Dorsolateral prefrontal cortex (tissue), 120 donors: ENCODE measurements at regions of chr3 and their contacts with region 1.

Region 1: GRCh38 chr3:160707187-160707794 is 30.3 kb downstream of the ARL14 start:
- DNase-seq: peak in 3 of 10 donors; percentile 17 to 60 (median 59)
- H3K4me3 ChIP-seq: peak overlapping the region in 7 of 59 donors; percentile 4 to 26 (median 12)
- H3K27ac ChIP-seq: no peak overlapping the region
- H3K27me3 ChIP-seq: no peaks in the 10 kb centered on the region
- CTCF ChIP-seq: peak; percentile 15 to 87 (median 68)

Region 2: GRCh38 chr3:160941885-160942494 is 234.7 kb after region 1 on chr3:
- intact Hi-C with region 1: loop called (anchors 2 kb)
- DNase-seq: peak in 6 of 10 donors; percentile 37 to 88 (median 68)
- H3K4me3 ChIP-seq: peak overlapping the region in 3 of 59 donors; percentile 1 to 25 (median 2)
- H3K27ac ChIP-seq: no peak overlapping the region
- H3K27me3 ChIP-seq: no peaks in the 10 kb centered on the region
- CTCF ChIP-seq: peak; percentile 14 to 99 (median 94)

Region 3: GRCh38 chr3:161423911-161424522 is 716.7 kb after region 1 on chr3:
- intact Hi-C with region 1: loop called in 1 of 2 experiments (anchors 10 kb)
- DNase-seq: no peak
- H3K4me3 ChIP-seq: no peak overlapping the region
- H3K27ac ChIP-seq: no peak overlapping the region
- H3K27me3 ChIP-seq: no peaks in the 10 kb centered on the region
- CTCF ChIP-seq: peak; percentile 76 to 99 (median 90)